ENCODE measurements at regions of chr16 and their contacts with region 1.

Region 1: DNA sequence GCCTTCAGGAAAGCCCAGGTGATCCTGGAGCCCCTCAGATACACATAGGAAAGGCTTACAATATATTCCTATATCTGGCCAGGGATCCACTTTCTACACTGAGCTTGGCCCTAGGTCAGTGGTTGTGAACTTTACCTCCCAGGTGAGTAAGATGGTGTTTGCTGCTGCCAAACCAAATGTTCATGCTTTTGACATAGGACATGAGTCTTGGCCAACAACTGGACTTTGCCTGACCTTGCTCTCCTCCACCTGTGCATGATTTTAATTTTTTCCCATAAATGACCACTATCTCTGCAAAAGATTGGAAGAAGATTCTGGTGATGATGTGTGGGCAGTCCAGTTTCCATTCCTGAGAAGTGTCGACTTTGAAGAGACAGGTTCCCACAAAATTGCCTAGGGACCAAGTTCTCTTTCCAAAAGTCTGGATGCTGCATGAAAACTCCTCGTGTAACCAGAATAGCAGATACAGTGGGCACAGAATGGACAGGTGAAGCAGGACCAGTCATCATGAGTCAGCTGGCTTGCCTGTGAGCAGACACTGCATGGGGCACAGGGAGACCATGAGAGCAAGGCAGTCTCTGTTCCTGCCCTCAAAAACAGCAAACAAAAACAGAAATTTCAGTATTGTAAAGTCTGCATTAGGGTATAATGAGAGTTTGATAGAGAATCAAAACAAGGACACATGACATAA is 226.4 kb upstream of the MON1B start:
- DNase-seq: no peak
- H3K4me3 ChIP-seq: no peak overlapping the region
- H3K27ac ChIP-seq: no peak overlapping the region
- H3K4me1 ChIP-seq: no peaks in the 10 kb centered on the region
- H3K27me3 ChIP-seq: no peaks in the 10 kb centered on the region
- CTCF ChIP-seq: no peak
- POLR2A ChIP-seq: no peak

Region 2: DNA sequence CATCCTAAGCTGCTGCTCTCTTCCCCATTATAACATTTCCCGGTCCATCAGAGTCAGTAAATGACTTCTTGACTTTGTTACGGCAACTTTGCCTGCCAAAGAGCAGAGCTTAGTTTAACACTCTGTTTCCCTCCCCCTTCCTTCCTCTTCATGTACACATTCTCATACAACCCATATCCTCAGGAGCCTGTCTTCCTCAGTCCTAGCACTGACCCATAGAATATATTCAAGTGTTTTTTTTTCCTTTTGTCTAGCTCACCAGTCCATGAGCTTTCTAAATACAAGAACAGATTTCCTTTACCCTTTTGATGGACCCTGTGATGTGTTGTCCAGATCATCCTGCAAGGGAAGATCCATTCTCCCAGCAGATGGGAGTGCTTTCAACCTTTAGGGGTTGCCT is 129.4 kb after region 1 on chr16:
- intact Hi-C with region 1: no loop called
- DNase-seq: no peak
- H3K4me3 ChIP-seq: no peak overlapping the region
- H3K27ac ChIP-seq: no peak overlapping the region
- H3K4me1 ChIP-seq: no peaks in the 10 kb centered on the region
- H3K27me3 ChIP-seq: no peaks in the 10 kb centered on the region
- CTCF ChIP-seq: no peak
- POLR2A ChIP-seq: no peak

Region 3: GRCh38 chr16:77290451-77291115 is 326.0 kb after region 1 on chr16:
- intact Hi-C with region 1: loop called (anchors 5 kb)
- DNase-seq: no peak
- H3K4me3 ChIP-seq: no peak overlapping the region
- H3K27ac ChIP-seq: no peak overlapping the region
- H3K4me1 ChIP-seq: no peaks in the 10 kb centered on the region
- H3K27me3 ChIP-seq: no peaks in the 10 kb centered on the region
- CTCF ChIP-seq: no peak
- POLR2A ChIP-seq: no peak

Measured in breast epithelium (tissue), 4 donors.